Prostate gland (tissue), 2 donors: ENCODE measurements at regions of chr13 and their contacts with region 1.

Region 1: DNA sequence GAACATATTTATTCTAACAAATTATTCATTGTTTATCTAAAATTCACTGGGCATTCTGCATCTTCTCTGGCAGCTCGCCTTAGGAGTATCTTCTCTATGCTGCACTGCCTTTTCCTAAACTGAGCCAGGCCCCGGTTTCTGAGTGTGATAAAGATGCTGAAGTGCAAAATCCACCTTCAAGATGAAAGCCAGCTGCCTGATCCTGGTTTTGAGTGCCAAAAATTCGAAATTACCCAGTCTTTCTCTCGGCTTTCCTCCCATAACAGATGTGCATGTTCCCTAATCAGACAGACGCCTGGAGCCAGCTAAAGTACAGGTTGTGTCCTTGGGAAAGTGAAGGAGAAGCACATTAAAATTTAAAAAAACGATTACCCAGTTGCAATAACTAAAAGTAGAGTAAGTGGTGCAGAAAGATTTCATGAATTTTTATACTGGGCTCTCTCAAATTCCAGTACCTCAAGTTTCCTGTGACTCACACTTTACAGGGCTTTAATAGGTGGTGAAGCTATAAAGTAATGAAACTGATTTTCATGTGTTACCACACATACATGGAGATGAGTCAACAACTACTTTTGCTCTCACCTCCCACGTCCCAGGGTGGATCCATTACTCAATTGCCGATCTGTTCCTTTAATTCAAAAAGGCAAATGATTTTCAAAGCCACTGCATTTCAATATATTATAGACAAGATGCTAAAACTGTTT is 65.0 kb upstream of the GTF2F2 start:
- DNase-seq: no peak
- H3K4me3 ChIP-seq: no peak overlapping the region
- H3K27ac ChIP-seq: peak overlapping the region in 1 of 2 donors; percentile 35
- H3K4me1 ChIP-seq: no peaks in the 10 kb centered on the region
- H3K27me3 ChIP-seq: no peaks in the 10 kb centered on the region
- CTCF ChIP-seq: no peak
- POLR2A ChIP-seq: no peak

Region 2: GRCh38 chr13:44726214-44726613 is 329.1 kb before region 1 on chr13:
- intact Hi-C with region 1: no loop called
- DNase-seq: no peak
- H3K4me3 ChIP-seq: no peak overlapping the region
- H3K27ac ChIP-seq: no peak overlapping the region
- H3K4me1 ChIP-seq: no peaks in the 10 kb centered on the region
- H3K27me3 ChIP-seq: no peaks in the 10 kb centered on the region
- CTCF ChIP-seq: no peak
- POLR2A ChIP-seq: no peak

Region 3: DNA sequence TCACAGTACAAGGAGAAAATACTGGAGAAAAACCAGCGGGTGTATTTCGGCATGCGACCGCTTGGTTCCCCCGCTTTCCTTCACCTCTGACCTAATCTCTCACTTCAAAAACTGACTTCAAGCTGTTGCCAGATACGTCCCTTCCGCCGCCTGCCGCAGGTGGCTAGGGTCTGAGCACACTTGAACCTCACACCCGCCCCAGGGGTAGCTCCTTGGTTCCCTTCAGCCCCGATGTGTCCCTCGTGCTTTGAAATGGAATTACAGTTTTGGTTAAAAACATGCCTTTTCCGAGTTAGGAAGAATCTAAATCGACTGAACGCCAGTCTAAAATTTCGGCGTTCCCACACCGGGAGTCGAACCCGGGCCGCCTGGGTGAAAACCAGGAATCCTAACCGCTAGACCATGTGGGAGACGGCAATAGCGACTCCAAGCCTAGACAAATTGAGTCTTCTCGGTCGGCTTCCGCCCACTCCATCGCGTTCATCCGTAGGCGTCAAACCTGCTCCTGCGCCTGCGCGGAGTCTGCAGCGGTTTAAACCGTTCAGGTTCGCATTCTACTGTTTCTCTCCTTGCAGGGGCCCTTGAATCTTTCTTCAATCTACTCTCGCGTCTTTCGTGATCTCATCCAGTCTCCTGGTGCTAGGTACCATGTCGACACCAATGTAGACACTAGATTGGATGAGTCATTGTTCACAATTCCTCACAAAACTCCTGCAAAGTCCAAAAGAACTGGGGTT is 137.6 kb before region 1 on chr13:
- intact Hi-C with region 1: no loop called
- DNase-seq: peak; percentile 95
- H3K4me3 ChIP-seq: peak overlapping the region; percentile 21 to 32
- H3K27ac ChIP-seq: peak overlapping the region; percentile 96 to 97
- H3K4me1 ChIP-seq: peaks cover 20% of the 10 kb centered on the region
- H3K27me3 ChIP-seq: no peaks in the 10 kb centered on the region
- CTCF ChIP-seq: peak in 2 of 4 experiments; percentile 46 to 54
- POLR2A ChIP-seq: peak; percentile 61

Region 4: GRCh38 chr13:45092663-45093062 is 37.3 kb after region 1 on chr13:
- intact Hi-C with region 1: no loop called
- DNase-seq: no peak
- H3K4me3 ChIP-seq: no peak overlapping the region
- H3K27ac ChIP-seq: no peak overlapping the region
- H3K4me1 ChIP-seq: no peaks in the 10 kb centered on the region
- H3K27me3 ChIP-seq: no peaks in the 10 kb centered on the region
- CTCF ChIP-seq: no peak
- POLR2A ChIP-seq: no peak

Region 5: GRCh38 chr13:45180713-45181601 is 125.6 kb after region 1 on chr13:
- intact Hi-C with region 1: loop called (anchors 10 kb)
- DNase-seq: no peak
- H3K4me3 ChIP-seq: no peak overlapping the region
- H3K27ac ChIP-seq: no peak overlapping the region
- H3K4me1 ChIP-seq: no peaks in the 10 kb centered on the region
- H3K27me3 ChIP-seq: no peaks in the 10 kb centered on the region
- CTCF ChIP-seq: no peak
- POLR2A ChIP-seq: no peak